Activated CD8-positive, alpha-beta T cell treated with anti-CD3 and anti-CD28 coated beads for 36 hours (primary cell): ENCODE measurements at regions of chr1 and their contacts with region 1.

Region 1: GRCh38 chr1:185279571-185279970 is 37.5 kb downstream of the IVNS1ABP start:
- DNase-seq: no peak
- ATAC-seq: no peak
- H3K4me3 Mint-ChIP-seq: no peak overlapping the region
- H3K27ac Mint-ChIP-seq: no peak overlapping the region
- H3K4me1 Mint-ChIP-seq: peaks cover 49% of the 10 kb centered on the region
- H3K27me3 Mint-ChIP-seq: no peaks in the 10 kb centered on the region
- CTCF ChIP-seq: no peak

Region 2: DNA sequence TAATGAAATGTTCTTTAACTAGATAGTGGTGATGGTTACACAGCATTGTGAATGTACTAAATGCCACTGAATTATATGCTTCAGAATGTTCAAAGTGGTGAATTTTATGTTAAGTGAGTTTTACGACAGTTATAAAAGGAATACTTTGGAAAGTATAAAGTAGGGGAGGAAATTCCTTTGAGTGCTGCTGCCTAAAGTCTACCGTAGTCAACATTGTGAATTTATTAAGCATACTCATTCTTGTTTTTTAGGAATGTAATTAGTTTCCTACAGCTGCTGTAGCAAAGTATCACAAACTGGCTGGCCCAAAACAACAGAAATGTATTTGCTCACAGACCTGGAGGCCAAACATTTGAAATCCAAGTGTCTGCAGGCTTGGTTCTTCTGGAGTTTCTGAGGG is 49.6 kb before region 1 on chr1:
- CTCF ChIA-PET with region 1: no interaction called
- POLR2A ChIA-PET with region 1: no interaction called
- intact Hi-C with region 1: loop called (anchors 2 kb)
- DNase-seq: no peak
- ATAC-seq: no peak
- H3K4me3 Mint-ChIP-seq: no peak overlapping the region
- H3K27ac Mint-ChIP-seq: no peak overlapping the region
- H3K4me1 Mint-ChIP-seq: no peaks in the 10 kb centered on the region
- H3K27me3 Mint-ChIP-seq: no peaks in the 10 kb centered on the region
- CTCF ChIP-seq: no peak